Pancreas (tissue), 10 donors: ENCODE measurements at regions of chr14 and their contacts with region 1.

Region 1: DNA sequence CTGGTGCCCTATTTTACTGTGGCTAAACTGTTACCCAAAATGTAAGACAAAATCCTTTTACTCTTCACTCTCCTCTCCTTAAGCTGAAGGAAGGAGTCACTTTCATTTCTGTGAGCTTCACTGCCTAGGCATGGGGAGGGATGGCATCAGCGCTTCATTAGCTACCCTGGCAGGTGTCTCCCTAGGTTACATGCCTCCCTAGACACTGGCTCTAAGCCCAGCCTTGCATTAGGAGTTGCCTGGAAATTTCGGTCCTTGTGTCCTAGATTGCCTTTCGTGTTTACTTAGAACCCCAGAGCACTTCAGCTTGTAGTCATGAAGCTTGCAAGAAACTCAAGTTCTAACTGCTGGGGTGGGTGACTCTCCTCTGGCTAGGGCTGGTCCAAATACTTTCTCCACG is 520.5 kb upstream of the STXBP6 start:
- DNase-seq: peak in 2 of 6 donors; percentile 4 to 13
- ATAC-seq: peak in 2 of 4 donors; percentile 75 to 86
- H3K4me3 ChIP-seq: no peak overlapping the region
- H3K27ac ChIP-seq: no peak overlapping the region
- H3K4me1 ChIP-seq: no peaks in the 10 kb centered on the region
- H3K27me3 ChIP-seq: no peaks in the 10 kb centered on the region
- CTCF ChIP-seq: no peak

Region 2: GRCh38 chr14:25756880-25757279 is 186.4 kb after region 1 on chr14:
- intact Hi-C with region 1: no loop called
- DNase-seq: no peak
- ATAC-seq: no peak
- H3K4me3 ChIP-seq: no peak overlapping the region
- H3K27ac ChIP-seq: no peak overlapping the region
- H3K4me1 ChIP-seq: no peaks in the 10 kb centered on the region
- H3K27me3 ChIP-seq: no peaks in the 10 kb centered on the region
- CTCF ChIP-seq: no peak

Region 3: GRCh38 chr14:25843481-25844470 is 273.3 kb after region 1 on chr14:
- intact Hi-C with region 1: loop called in 1 of 3 experiments (anchors 10 kb)
- DNase-seq: no peak
- ATAC-seq: no peak
- H3K4me3 ChIP-seq: no peak overlapping the region
- H3K27ac ChIP-seq: no peak overlapping the region
- H3K4me1 ChIP-seq: no peaks in the 10 kb centered on the region
- H3K27me3 ChIP-seq: no peaks in the 10 kb centered on the region
- CTCF ChIP-seq: no peak